OCI-LY7 (cell line): ENCODE measurements at regions of chr13 and their contacts with region 1.

Region 1: DNA sequence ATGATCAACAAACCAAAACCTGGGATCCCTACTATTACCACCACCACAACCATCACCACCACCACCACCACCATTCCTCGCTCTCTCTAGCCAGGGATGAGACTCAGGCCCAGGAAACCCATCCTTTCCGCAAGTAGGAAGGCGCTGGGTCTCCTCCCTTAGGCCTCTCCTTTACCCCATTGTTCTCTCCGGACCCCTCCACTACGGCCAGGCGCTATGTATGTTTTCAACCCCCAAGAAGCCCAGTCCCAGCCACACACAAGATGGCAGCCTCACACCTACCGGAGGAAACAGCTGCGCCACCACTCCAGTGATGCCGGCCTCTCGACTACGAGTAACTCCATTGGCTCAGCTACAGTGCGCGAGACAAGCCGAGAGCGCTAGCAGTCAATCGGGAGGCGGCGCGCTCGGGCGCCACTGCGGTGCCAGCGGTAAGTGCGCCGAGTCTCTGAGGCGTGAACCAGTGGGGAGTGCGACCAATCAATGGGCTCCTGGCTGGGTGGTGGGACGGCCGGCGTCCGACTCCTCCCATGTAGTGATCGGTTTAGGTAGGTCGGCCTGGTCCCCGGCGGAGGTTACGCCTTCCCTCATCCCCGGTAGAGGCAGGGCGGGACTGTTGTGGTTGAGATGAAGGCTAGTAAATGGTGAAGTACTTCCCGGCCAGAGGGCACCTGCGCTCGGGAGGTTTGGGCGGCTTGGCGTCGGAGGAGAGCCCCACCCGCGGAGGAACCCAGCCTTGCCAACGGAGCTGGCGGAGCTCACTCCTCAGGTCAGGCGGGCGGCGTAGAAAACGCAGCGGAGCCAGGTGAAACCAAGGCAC is at the starts of genes CAB39L and SETDB2:
- DNase-seq: peak; percentile 100
- H3K4me3 ChIP-seq: peak within 1 kb of the TSS; percentile 82
- H3K27ac ChIP-seq: peak within 1 kb of the TSS; percentile 90
- H3K4me1 ChIP-seq: peaks cover 52% of the 10 kb centered on the region
- CTCF ChIP-seq: peak; percentile 65
- total RNA-seq, gene CAB39L: 5.4 and 9.6 TPM in 2 replicates
- total RNA-seq, gene SETDB2: 22.0 and 23.3 TPM in 2 replicates

Region 2: GRCh38 chr13:48975856-48976575 is 467.9 kb before region 1 on chr13 and contains the start of gene FNDC3A:
- CTCF ChIA-PET with region 1: no interaction called
- POLR2A ChIA-PET with region 1: no interaction called
- intact Hi-C with region 1: loop called (anchors 2 kb)
- DNase-seq: peak; percentile 82
- H3K4me3 ChIP-seq: peak within 1 kb of the TSS; percentile 89
- H3K27ac ChIP-seq: peak within 1 kb of the TSS; percentile 91
- H3K4me1 ChIP-seq: peaks cover 35% of the 10 kb centered on the region
- CTCF ChIP-seq: peak; percentile 43; the same call in 1 of the 2 replicates
- total RNA-seq, gene FNDC3A: 33.0 and 38.7 TPM in 2 replicates

Region 3: DNA sequence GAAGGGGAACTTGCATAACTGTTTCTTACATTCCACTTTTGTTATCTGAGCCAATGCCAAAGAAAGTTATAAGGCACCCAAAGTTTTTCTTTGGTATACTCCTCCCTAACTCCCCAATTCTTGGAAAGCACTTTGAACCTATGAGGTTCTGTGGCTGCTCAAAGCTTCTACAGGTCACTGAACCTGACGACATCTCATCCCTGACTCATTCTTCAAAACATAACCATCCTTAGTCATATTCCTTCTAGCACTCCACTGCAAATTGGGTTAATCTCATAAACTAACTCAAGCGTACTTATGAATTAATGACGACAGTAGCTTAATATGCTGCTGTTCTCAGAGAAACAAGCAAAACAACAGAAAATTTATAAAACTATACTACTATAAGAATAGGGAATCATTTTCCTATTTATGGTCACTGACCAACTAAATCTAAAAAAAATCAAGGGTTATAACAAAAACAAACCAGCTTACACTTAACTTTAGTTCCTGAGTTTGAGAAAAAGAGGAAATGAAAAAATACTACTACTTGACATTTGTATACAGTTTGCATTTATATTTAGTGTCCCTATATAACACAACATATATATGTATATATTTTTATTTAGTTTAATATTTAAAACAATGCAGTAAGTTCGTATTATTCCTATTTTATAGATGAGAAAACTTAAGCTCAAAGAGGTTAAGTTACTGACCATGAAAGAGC is 69.2 kb before region 1 on chr13:
- CTCF ChIA-PET with region 1: interaction called, 3 read pairs
- POLR2A ChIA-PET with region 1: interaction called, 139 read pairs
- intact Hi-C with region 1: loop called (anchors 1 kb)
- DNase-seq: peak; percentile 23
- H3K4me3 ChIP-seq: peak overlapping the region; percentile 45
- H3K27ac ChIP-seq: peak overlapping the region; percentile 98
- H3K4me1 ChIP-seq: peaks cover 71% of the 10 kb centered on the region
- CTCF ChIP-seq: no peak

Region 4: DNA sequence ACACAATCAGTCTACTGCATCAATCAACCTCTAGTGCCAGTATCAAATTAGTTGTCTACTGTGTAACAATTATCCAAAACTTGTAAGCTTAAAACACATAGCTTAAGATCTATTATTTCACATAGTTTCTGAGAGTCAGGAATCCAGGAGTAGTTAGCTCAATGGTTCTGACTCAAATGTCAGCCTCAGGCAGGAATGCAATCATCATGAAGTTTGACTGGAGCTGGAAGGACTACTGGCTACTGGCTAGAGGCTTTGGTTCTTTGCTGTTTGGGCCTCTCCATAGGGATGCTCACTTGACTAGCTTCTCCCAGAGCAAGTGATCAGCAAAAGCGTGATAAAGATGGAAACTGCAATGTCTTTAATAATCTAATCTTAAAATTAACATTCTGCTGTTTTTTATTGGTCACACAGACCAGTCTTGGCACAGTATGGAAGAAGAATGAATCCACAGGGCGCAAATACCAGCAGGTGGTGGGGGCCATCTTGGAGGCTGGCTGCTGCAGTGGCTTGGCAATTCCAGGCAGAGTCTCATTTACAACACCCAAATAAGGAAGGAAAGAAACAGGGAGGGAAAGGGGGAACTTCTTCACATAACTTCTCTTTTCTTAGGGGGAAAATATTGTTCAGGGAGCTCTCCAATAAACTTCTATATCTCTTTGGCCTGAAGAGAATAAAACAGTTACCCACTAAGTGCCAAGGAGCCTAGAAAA is 15.7 kb before region 1 on chr13:
- CTCF ChIA-PET with region 1: interaction called, 3 read pairs
- POLR2A ChIA-PET with region 1: interaction called, 46 read pairs
- intact Hi-C with region 1: no loop called
- DNase-seq: no peak
- H3K4me3 ChIP-seq: no peak overlapping the region
- H3K27ac ChIP-seq: no peak overlapping the region
- H3K4me1 ChIP-seq: peaks cover 10% of the 10 kb centered on the region
- CTCF ChIP-seq: no peak

Region 5: GRCh38 chr13:49495783-49496762 is 52.2 kb after region 1 on chr13 and contains the start of gene PHF11:
- CTCF ChIA-PET with region 1: interaction called, 3 read pairs
- POLR2A ChIA-PET with region 1: interaction called, 28 read pairs
- intact Hi-C with region 1: no loop called
- DNase-seq: peak; percentile 94
- H3K4me3 ChIP-seq: peak within 1 kb of the TSS; percentile 76
- H3K27ac ChIP-seq: peak within 1 kb of the TSS; percentile 91
- H3K4me1 ChIP-seq: peaks cover 44% of the 10 kb centered on the region
- CTCF ChIP-seq: peak; percentile 36; the same call in 1 of the 2 replicates
- total RNA-seq, gene PHF11: 29.9 and 32.8 TPM in 2 replicates

Region 6: GRCh38 chr13:49606747-49607648 is 163.1 kb after region 1 on chr13:
- CTCF ChIA-PET with region 1: interaction called, 5 read pairs
- POLR2A ChIA-PET with region 1: interaction called, 15 read pairs
- intact Hi-C with region 1: loop called (anchors 1 kb)
- DNase-seq: peak; percentile 93
- H3K4me3 ChIP-seq: peak overlapping the region; percentile 53
- H3K27ac ChIP-seq: peak overlapping the region; percentile 71
- H3K4me1 ChIP-seq: peaks cover 57% of the 10 kb centered on the region
- CTCF ChIP-seq: peak; percentile 98